Dorsolateral prefrontal cortex (tissue), 120 donors: ENCODE measurements at regions of chr2 and their contacts with region 1.

Region 1: DNA sequence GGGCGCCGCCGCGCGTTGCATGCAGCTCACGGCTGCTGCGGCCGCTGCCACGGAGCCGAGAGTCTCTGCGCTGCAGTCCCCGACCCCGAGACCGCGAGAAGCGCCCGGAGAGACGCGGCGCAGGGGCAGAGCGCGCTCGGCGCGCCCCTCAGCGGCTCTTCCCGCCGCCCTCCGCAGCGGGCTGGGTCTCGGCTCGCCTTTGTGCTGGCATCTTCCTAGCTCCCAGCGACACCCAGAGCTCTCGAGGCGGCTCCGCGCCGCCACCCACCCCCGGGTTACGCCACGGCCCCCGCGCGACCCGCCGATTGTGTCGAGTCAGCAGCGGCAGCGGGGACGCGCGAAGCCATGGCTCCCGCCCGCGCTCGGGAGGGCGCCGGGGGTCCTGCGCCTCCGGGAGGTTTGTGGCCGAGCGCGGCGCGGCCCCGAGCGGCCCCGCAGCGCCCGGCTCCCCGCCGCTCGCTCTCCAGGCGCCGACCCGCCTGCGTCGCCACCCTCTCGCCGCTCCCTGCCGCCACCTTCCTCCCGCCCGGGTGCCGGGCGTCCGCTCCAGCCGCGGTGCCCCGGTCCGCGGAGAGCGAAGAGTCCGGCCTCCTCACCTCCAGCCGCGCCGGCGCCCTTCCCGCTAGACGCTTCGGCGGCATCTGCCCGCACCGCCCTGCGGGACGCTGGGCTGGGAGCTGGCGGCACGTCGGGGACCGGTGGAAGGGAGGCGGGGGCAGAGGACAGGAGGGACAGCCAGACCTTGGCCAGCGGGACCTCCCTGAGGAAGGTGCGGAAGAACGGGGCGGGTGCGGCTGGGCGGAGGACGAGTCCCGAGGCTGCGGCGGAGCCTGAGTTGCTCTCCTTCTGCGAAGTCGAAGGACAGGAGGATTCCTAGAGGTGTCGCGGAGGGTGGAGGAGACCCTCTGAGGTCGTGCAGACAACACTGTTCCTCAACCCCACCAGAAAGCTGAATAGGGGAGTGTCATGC is 46.3 kb upstream of the CCDC150 start:
- DNase-seq: peak; percentile 57 to 83 (median 67)
- H3K4me3 ChIP-seq: peak within 1 kb of the TSS; percentile 59 to 91 (median 76)
- H3K27ac ChIP-seq: peak within 1 kb of the TSS; percentile 89 to 99 (median 97)
- H3K27me3 ChIP-seq: peaks cover 0 to 4% (median 0%) of the 10 kb centered on the region in 45 donors
- CTCF ChIP-seq: peak in 53 of 56 donors; percentile 11 to 65 (median 40)

Region 2: DNA sequence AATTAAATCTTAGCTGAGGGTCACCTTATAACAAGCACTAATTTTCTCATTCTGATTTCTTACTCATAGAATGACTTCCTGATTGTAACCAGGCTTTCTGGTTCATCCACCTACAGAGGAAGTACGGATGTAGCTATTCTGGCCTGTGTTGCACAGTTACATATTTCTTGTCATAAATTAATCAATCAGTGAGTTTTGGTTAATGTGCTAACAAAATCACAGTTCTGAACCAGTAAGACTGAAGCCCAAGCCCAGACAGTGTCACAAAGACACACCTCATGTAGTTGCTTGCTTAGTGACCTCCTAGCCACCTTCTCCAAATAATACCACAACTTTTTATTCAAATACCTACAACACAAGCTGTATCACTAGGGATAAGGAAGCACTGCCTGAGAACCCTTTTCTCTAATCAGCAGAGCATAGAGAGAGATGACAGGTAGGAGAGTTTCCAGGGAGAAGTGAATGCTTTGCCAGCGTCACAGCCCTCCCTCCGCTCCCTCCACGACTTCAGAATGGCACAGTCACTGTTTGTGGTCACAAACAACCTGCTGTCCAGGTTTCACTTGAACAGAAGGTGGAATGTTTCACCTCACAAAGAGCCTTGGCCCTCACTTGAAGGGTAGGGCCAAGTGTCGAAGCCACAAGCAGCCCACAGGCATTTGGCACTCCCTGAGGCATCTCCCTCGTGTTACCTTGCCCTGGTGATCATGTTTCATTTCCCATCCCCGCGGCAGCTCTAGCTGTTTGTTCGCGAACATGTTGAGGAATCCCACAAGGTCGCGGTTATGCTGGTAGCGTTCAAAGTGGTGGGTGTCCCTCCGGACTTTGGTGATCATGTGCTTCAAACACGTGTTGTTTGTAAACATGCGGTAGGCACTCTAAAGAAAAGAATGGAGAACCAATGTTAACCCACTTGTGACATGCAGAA is 301.1 kb before region 1 on chr2:
- intact Hi-C with region 1: loop called in 1 of 2 experiments (anchors 5 kb)
- DNase-seq: peak in 1 of 10 donors; percentile 16
- H3K4me3 ChIP-seq: no peak overlapping the region
- H3K27ac ChIP-seq: no peak overlapping the region
- H3K27me3 ChIP-seq: no peaks in the 10 kb centered on the region
- CTCF ChIP-seq: no peak

Region 3: GRCh38 chr2:196431957-196432356 is 161.2 kb before region 1 on chr2:
- intact Hi-C with region 1: loop called in 1 of 2 experiments (anchors 5 kb)
- DNase-seq: no peak
- H3K4me3 ChIP-seq: no peak overlapping the region
- H3K27ac ChIP-seq: peak overlapping the region in 2 of 59 donors; percentile 9 to 51
- H3K27me3 ChIP-seq: no peaks in the 10 kb centered on the region
- CTCF ChIP-seq: peak in 51 of 56 donors; percentile 17 to 60 (median 44)

Region 4: GRCh38 chr2:196502386-196502785 is 90.8 kb before region 1 on chr2:
- intact Hi-C with region 1: loop called in 1 of 2 experiments (anchors 1 kb)
- DNase-seq: no peak
- H3K4me3 ChIP-seq: no peak overlapping the region
- H3K27ac ChIP-seq: peak overlapping the region in 5 of 59 donors; percentile 10 to 53 (median 39)
- H3K27me3 ChIP-seq: no peaks in the 10 kb centered on the region
- CTCF ChIP-seq: peak in 31 of 56 donors; percentile 9 to 61 (median 30)

Region 5: GRCh38 chr2:196639180-196640030 is 46.2 kb after region 1 on chr2 and contains the start of gene CCDC150:
- intact Hi-C with region 1: loop called (anchors 2 to 5 kb)
- DNase-seq: peak; percentile 87 to 97 (median 94)
- H3K4me3 ChIP-seq: peak within 1 kb of the TSS; percentile 34 to 89 (median 74)
- H3K27ac ChIP-seq: peak within 1 kb of the TSS in 36 of 59 donors; percentile 4 to 73 (median 46)
- H3K27me3 ChIP-seq: no peaks in the 10 kb centered on the region
- CTCF ChIP-seq: peak in 51 of 56 donors; percentile 24 to 71 (median 52)
- total RNA-seq, gene CCDC150: 0.67 to 10.5 (median 4.1) TPM